Right ventricle myocardium inferior (tissue), 1 donor: ENCODE measurements at regions of chr15 and their contacts with region 1.

Region 1: GRCh38 chr15:64856429-64857145 is 14.9 kb downstream of the PLEKHO2 start:
- DNase-seq: peak; percentile 81
- ATAC-seq: peak; percentile 77

Region 2: GRCh38 chr15:64503197-64503596 is 353.4 kb before region 1 on chr15:
- intact Hi-C with region 1: no loop called
- DNase-seq: no peak
- ATAC-seq: no peak

Region 3: DNA sequence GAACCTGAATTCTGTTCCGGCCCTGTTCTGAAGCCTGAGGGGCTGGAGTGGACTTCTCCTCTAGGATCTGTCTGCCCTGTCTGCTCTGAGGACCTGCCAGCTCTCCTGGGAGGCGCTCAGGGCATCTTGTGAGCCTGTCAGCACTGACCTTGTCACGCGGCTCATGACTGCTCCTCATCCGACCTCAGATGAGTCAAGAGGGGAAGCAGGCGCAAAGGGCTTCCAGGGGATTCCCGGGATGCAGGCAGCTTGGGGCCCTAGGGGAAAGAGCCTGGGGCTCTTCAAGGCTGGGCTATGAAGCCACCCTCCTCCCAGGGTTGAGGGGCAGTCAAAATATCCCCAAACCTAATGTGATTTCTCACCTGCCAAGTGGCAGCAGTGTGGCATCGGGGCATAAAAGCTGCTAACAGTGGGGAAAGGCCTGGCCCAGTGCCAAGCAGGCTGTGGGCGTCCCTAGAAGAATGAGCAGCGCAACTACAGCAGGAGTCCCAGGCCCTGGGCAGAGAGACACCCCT is 27.5 kb after region 1 on chr15:
- intact Hi-C with region 1: no loop called
- DNase-seq: peak; percentile 87
- ATAC-seq: peak; percentile 67

Region 4: GRCh38 chr15:64989416-64990167 is 133.0 kb after region 1 on chr15 and contains the start of gene SPG21:
- intact Hi-C with region 1: loop called (anchors 10 kb)
- DNase-seq: peak; percentile 97
- ATAC-seq: peak; percentile 96
- total RNA-seq, gene SPG21: 45.3 TPM